ENCODE measurements at regions of chr7 and their contacts with region 1.

Region 1: GRCh38 chr7:28062197-28062991 is 118.2 kb downstream of the JAZF1 start:
- DNase-seq: peak; percentile 74
- H3K4me3 Mint-ChIP-seq: no peak overlapping the region
- H3K27ac Mint-ChIP-seq: no peak overlapping the region
- H3K4me1 Mint-ChIP-seq: peaks cover 3% of the 10 kb centered on the region
- H3K27me3 Mint-ChIP-seq: peaks cover 3% of the 10 kb centered on the region

Region 2: GRCh38 chr7:28078036-28078901 is 15.9 kb after region 1 on chr7:
- CTCF ChIA-PET with region 1: interaction called, 16 read pairs
- intact Hi-C with region 1: no loop called
- DNase-seq: peak; percentile 67
- H3K4me3 Mint-ChIP-seq: no peak overlapping the region
- H3K27ac Mint-ChIP-seq: no peak overlapping the region
- H3K4me1 Mint-ChIP-seq: no peaks in the 10 kb centered on the region
- H3K27me3 Mint-ChIP-seq: no peaks in the 10 kb centered on the region